ENCODE measurements at regions of chr1 and their contacts with region 1.

Region 1: GRCh38 chr1:181166377-181167196 is 78.1 kb downstream of the IER5 start:
- DNase-seq: peak; percentile 89
- H3K4me3 ChIP-seq: no peak overlapping the region
- H3K27ac ChIP-seq: no peak overlapping the region
- H3K4me1 ChIP-seq: peaks cover 2% of the 10 kb centered on the region
- H3K27me3 ChIP-seq: no peaks in the 10 kb centered on the region
- CTCF ChIP-seq: peak; percentile 87

Region 2: DNA sequence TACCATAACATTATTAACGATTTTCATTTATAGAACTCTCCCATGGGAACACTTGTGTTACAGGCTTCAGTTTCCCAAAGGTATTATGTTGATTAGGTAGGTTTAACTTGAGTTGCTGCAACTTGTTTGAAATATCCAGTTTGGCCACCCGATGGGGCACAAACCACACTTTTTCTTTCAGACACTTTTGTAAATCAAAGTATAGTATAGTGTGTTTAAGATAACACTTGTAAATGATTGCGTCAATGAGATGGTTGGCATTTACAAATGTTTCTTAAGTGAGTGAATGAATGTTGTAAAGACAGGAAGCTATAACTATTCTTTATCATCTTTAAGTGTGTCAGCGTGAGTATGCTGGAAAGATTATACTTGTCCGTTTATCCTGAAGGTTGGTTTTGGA is 530.4 kb before region 1 on chr1:
- CTCF ChIA-PET with region 1: no interaction called
- POLR2A ChIA-PET with region 1: no interaction called
- intact Hi-C with region 1: loop called (anchors 5 kb)
- DNase-seq: peak; percentile 73
- H3K4me3 ChIP-seq: no peak overlapping the region
- H3K27ac ChIP-seq: no peak overlapping the region
- H3K4me1 ChIP-seq: peaks cover 47% of the 10 kb centered on the region
- H3K27me3 ChIP-seq: no peaks in the 10 kb centered on the region
- CTCF ChIP-seq: peak; percentile 62

Region 3: DNA sequence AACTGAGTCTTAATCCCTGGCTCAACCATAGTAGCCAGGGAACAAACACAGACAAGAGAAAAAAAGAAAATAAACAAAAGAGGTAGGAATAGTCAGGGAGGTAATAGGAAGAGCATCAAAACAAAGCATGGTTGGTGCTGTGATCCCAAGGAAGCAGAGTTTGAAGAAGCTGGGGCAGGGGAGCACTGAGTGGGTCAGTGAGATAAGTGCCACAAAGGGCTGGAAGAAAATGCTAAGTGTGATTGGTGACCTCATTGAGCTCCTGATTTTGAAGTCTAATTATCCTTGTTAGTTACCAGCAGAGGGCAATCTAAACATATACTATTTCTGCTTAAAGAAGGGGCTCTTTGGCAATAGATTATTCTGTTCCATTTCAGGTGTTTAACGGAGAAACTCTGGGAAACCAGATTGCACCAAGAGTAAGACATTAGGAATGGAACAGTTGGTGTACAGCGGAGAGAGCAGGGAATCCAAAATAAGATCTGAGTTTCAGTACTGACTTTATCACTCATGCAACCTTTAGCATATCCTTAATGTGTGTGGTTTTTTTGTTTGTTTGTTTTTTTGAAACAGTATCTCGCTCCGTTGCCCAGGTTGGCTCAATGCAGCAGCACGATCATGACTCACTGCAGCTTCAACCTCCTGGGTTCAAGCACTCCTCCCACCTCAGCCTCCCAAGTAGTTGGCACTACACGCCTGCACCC is 284.6 kb before region 1 on chr1:
- CTCF ChIA-PET with region 1: no interaction called
- POLR2A ChIA-PET with region 1: no interaction called
- intact Hi-C with region 1: loop called (anchors 1 kb)
- DNase-seq: peak; percentile 63
- H3K4me3 ChIP-seq: no peak overlapping the region
- H3K27ac ChIP-seq: no peak overlapping the region
- H3K4me1 ChIP-seq: no peaks in the 10 kb centered on the region
- H3K27me3 ChIP-seq: no peaks in the 10 kb centered on the region
- CTCF ChIP-seq: peak; percentile 55

Region 4: GRCh38 chr1:180951836-180952656 is 214.5 kb before region 1 on chr1:
- CTCF ChIA-PET with region 1: interaction called, 15 read pairs
- POLR2A ChIA-PET with region 1: no interaction called
- intact Hi-C with region 1: no loop called
- DNase-seq: no peak
- H3K4me3 ChIP-seq: no peak overlapping the region
- H3K27ac ChIP-seq: no peak overlapping the region
- H3K4me1 ChIP-seq: peaks cover 14% of the 10 kb centered on the region
- H3K27me3 ChIP-seq: no peaks in the 10 kb centered on the region
- CTCF ChIP-seq: no peak

Measured in A673 (cell line).